AG04449 (cell line): ENCODE measurements at regions of chr3 and their contacts with region 1.

Region 1: DNA sequence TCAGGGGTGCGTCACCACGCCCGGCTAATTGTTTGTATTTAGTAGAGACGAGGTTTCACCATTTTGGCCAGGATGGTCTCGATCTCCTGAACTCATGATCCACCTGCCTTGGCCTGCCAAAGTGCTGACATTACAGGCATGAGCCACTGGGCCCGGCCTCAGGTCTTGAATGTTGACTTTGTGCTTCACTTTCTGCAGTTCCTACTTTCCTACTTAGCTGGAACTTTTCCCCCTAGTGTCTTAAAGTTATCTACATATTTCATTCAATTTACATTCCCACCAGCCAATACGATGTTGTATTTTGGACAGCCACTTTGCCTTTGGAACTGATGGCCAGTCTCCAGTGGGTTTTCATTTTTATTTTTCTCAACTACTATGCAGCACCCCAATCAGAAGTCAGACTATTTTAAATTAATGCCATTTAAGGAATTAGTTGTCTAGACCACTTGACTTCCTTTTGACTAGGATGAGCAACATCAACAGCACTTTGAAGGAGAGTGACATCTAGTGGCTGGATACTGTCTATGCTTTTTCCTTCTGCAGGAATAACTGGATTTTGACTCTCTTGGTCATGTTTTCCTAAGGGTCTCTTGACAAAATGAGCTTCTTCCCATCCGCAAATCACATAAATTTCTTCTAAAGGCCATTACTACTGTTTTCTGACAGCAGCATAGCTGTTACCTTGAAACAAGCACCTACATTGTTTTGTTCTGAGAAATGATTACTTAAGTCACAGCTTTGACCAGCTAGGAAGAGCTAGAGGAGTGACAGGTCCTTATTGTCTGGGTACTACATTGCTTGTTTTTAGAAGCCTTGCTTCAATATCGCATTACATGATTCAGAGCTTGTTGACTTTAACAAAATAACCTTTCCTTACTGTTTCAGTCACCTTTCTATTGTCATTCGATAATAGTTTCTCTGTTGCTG is 140.2 kb downstream of the ITPR1 start:
- DNase-seq: peak; percentile 31
- H3K4me3 ChIP-seq: no peak overlapping the region
- CTCF ChIP-seq: peak; percentile 81

Region 2: GRCh38 chr3:4334548-4334947 is 298.8 kb before region 1 on chr3:
- CTCF ChIA-PET with region 1: interaction called, 14 read pairs
- POLR2A ChIA-PET with region 1: no interaction called
- DNase-seq: no peak
- H3K4me3 ChIP-seq: no peak overlapping the region
- CTCF ChIP-seq: no peak

Region 3: GRCh38 chr3:4350789-4351163 is 282.6 kb before region 1 on chr3:
- CTCF ChIA-PET with region 1: interaction called, 241 read pairs
- POLR2A ChIA-PET with region 1: no interaction called
- DNase-seq: peak; percentile 14
- H3K4me3 ChIP-seq: no peak overlapping the region
- CTCF ChIP-seq: peak; percentile 50

Region 4: DNA sequence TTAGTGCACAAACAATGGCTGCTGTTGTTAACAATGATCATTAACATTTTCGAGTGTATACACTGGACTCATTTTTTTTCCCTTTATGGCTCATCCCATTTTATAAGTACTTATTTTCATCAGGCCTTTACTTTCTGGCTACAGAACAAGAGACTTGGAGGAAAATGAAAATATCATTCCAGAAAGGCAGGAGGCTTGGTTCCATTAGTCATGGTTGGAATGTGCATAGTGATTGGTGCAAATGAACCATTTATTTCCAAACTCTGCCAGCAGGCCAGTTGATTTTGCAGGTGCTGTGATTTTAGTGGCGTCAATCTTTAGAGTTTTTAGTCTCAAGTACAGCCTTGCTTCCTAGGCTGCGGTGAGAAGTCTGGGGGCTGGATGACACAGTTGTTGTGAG is 11.6 kb after region 1 on chr3:
- CTCF ChIA-PET with region 1: interaction called, 30 read pairs
- POLR2A ChIA-PET with region 1: no interaction called
- DNase-seq: no peak
- H3K4me3 ChIP-seq: no peak overlapping the region
- CTCF ChIP-seq: no peak